IMR-90 (cell line): ENCODE measurements at regions of chr17 and their contacts with region 1.

Region 1: GRCh38 chr17:77935121-77935571 is 23.4 kb upstream of the TNRC6C start:
- DNase-seq: no peak
- ATAC-seq: no peak
- H3K4me3 ChIP-seq: no peak overlapping the region
- H3K27ac ChIP-seq: no peak overlapping the region
- H3K4me1 ChIP-seq: no peaks in the 10 kb centered on the region
- H3K27me3 ChIP-seq: peaks cover 51% of the 10 kb centered on the region
- CTCF ChIP-seq: no peak
- POLR2A ChIP-seq: no peak
- RAD21 ChIP-seq: no peak

Region 2: DNA sequence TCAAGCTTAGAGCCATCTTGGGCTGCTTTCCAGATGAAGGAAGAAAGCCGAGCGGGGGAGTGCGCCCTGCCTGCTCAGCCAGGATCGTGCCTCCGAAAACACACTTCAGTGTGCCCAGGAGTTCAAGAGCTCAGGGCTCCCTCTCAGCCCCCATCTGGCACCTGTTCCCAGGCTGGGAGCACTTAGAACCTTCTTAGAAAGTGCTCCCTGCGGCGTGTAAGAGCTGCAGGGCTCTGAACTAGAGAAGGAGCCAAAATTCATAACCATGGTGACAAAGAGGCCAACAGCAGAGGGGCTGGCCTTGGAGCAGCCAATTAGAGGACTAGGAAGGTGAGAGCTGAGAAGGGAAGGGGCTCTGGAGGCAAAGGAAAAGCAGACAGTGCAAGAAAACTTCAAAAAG is 35.6 kb before region 1 on chr17:
- CTCF ChIA-PET with region 1: no interaction called
- POLR2A ChIA-PET with region 1: no interaction called
- dilution Hi-C with region 1: no loop called
- in situ Hi-C with region 1: loop called (anchors 5 kb)
- intact Hi-C with region 1: no loop called
- DNase-seq: no peak
- ATAC-seq: no peak
- H3K4me3 ChIP-seq: no peak overlapping the region
- H3K27ac ChIP-seq: no peak overlapping the region
- H3K4me1 ChIP-seq: no peaks in the 10 kb centered on the region
- H3K27me3 ChIP-seq: peaks cover 51% of the 10 kb centered on the region
- CTCF ChIP-seq: no peak
- POLR2A ChIP-seq: no peak
- RAD21 ChIP-seq: no peak